ENCODE measurements at regions of chr11 and their contacts with region 1.

Region 1: GRCh38 chr11:116927163-116927974 is 89.9 kb upstream of the APOA1 start:
- DNase-seq: peak; percentile 39
- ATAC-seq: no peak
- H3K4me3 ChIP-seq: no peak overlapping the region
- H3K27ac ChIP-seq: no peak overlapping the region
- H3K4me1 ChIP-seq: peaks cover 18% of the 10 kb centered on the region
- H3K27me3 ChIP-seq: no peaks in the 10 kb centered on the region
- CTCF ChIP-seq: peak; percentile 66

Region 2: GRCh38 chr11:117143871-117144476 is 216.6 kb after region 1 on chr11 and contains the start of gene PAFAH1B2:
- CTCF ChIA-PET with region 1: no interaction called
- POLR2A ChIA-PET with region 1: interaction called, 18 read pairs
- intact Hi-C with region 1: no loop called
- DNase-seq: peak; percentile 98
- ATAC-seq: peak; percentile 91
- H3K4me3 ChIP-seq: peak within 1 kb of the TSS; percentile 81
- H3K27ac ChIP-seq: peak within 1 kb of the TSS; percentile 76
- H3K4me1 ChIP-seq: peaks cover 13% of the 10 kb centered on the region; the same call in 1 of the 2 replicates
- H3K27me3 ChIP-seq: no peaks in the 10 kb centered on the region
- CTCF ChIP-seq: no peak
- total RNA-seq, gene PAFAH1B2: 88.6 and 91.6 TPM in 2 replicates